ENCODE measurements at regions of chr9 and their contacts with region 1.

Region 1: DNA sequence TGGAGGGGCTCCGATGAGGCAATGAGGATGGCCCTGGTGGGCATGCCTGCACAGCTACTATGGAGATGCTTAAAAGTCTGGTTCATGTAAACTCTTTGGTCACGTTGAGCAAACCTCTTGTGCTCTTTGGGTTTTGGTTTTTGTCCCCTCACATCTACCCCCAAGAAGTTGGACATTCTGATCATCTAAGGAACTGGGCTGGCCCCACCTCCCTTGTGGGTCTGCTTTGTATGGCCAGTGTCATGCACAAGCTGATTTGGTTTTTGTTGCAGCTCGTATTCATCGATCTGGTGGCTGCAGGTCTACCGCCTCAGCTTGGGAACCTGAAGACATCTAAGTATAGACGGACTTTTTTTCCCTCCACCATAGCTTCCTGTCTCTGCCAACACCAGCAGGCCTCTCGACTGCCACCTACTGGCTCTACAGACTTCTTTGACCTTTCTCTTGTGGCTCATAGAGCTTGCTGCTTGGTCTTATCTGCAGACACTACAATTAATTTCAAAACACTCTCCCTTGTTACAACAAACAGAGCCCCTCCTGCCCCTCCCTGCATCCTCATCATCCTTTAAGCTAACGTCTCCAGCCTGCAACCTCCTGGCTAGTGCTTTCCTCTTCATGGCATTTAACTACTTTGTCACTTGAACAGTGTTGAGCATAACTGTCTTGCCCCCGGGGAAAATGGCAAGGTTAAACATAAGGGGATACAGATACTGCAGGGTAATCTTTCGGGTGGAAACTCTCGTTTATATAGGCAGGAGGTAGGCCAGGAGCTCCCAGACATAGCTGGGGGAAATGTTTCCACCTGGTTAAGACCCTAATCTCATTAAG is 34.5 kb downstream of the TSTD2 start:
- DNase-seq: peak; percentile 87
- H3K4me3 Mint-ChIP-seq: no peak overlapping the region
- H3K27ac Mint-ChIP-seq: no peak overlapping the region
- H3K4me1 Mint-ChIP-seq: peaks cover 4% of the 10 kb centered on the region
- H3K27me3 Mint-ChIP-seq: no peaks in the 10 kb centered on the region

Region 2: DNA sequence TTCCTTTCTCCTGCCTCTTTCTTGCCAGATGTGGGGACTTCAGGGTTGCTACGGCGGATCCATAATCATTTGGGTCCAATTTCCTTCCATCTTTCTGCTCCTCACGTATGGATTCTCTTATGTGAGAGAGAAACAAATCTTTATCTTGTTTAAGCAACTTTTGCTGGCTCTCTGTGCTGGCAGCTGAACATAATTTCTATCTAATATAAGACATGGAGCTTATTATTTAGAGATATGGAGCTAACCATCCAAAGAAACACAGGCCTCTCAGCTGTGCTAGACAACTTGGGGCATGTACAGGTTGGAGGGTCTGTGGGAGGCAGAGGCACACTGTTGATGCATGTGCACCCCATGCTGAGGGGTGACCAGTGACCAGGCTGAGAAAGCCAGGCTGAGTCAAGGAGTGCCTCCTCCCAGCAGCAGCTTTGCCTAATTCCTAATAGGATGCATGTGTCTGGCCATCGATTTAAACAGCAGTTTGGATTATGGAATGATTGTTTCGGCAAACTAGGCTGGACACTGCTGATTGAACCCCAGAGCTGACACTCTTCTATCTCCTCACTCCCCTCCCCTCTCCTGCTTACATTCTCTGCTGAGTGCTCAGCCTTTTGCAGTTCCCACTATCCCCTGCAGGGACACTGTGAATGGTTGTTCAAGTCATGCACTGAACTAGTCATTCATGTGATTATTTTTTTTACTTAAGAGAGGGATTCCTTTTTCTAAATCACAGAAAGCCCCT is 1527.4 kb before region 1 on chr9:
- CTCF ChIA-PET with region 1: no interaction called
- intact Hi-C with region 1: no loop called
- DNase-seq: peak; percentile 52
- H3K4me3 Mint-ChIP-seq: no peak overlapping the region
- H3K27ac Mint-ChIP-seq: no peak overlapping the region
- H3K4me1 Mint-ChIP-seq: no peaks in the 10 kb centered on the region
- H3K27me3 Mint-ChIP-seq: peaks cover 2% of the 10 kb centered on the region

Region 3: DNA sequence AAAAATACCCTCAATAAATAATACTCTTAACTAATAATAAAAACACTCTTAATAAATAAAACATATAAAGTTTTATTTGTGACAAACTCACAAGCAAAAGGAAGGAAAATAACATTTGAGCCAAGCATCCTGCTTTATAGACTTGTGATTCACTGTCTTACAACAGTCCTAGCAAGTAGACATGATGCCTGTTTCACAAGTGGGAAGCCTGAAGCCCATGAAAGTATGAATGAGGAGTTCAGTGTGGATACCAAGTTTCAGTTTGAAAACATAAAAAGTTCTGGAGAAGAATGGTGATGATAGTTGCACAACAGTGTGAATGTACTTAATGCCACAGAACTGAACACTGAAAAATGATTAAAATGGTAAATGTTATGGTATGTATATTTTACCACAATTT is 1137.8 kb before region 1 on chr9:
- CTCF ChIA-PET with region 1: no interaction called
- intact Hi-C with region 1: no loop called
- DNase-seq: no peak
- H3K4me3 Mint-ChIP-seq: no peak overlapping the region
- H3K27ac Mint-ChIP-seq: no peak overlapping the region
- H3K4me1 Mint-ChIP-seq: peaks cover 10% of the 10 kb centered on the region
- H3K27me3 Mint-ChIP-seq: no peaks in the 10 kb centered on the region

Region 4: GRCh38 chr9:97386733-97387503 is 211.8 kb before region 1 on chr9:
- CTCF ChIA-PET with region 1: interaction called, 21 read pairs
- intact Hi-C with region 1: loop called (anchors 1 kb)
- DNase-seq: peak; percentile 86
- H3K4me3 Mint-ChIP-seq: no peak overlapping the region
- H3K27ac Mint-ChIP-seq: no peak overlapping the region
- H3K4me1 Mint-ChIP-seq: peaks cover 19% of the 10 kb centered on the region
- H3K27me3 Mint-ChIP-seq: peaks cover 14% of the 10 kb centered on the region

Region 5: GRCh38 chr9:97411789-97412625 is 186.7 kb before region 1 on chr9 and contains the start of gene TDRD7:
- CTCF ChIA-PET with region 1: interaction called, 32 read pairs
- intact Hi-C with region 1: loop called (anchors 1 kb)
- DNase-seq: peak; percentile 85
- H3K4me3 Mint-ChIP-seq: peak within 1 kb of the TSS; percentile 79
- H3K27ac Mint-ChIP-seq: peak within 1 kb of the TSS; percentile 44
- H3K4me1 Mint-ChIP-seq: peaks cover 13% of the 10 kb centered on the region
- H3K27me3 Mint-ChIP-seq: peaks cover 9% of the 10 kb centered on the region
- total RNA-seq, gene TDRD7: 6.9 to 7.4 TPM

Region 6: GRCh38 chr9:97468658-97469448 is 129.8 kb before region 1 on chr9:
- CTCF ChIA-PET with region 1: interaction called, 129 read pairs
- intact Hi-C with region 1: loop called (anchors 1 kb)
- DNase-seq: peak; percentile 65
- H3K4me3 Mint-ChIP-seq: no peak overlapping the region
- H3K27ac Mint-ChIP-seq: no peak overlapping the region
- H3K4me1 Mint-ChIP-seq: no peaks in the 10 kb centered on the region
- H3K27me3 Mint-ChIP-seq: no peaks in the 10 kb centered on the region

Region 7: GRCh38 chr9:97475059-97475458 is 123.6 kb before region 1 on chr9:
- CTCF ChIA-PET with region 1: interaction called, 129 read pairs
- intact Hi-C with region 1: no loop called
- DNase-seq: no peak
- H3K4me3 Mint-ChIP-seq: no peak overlapping the region
- H3K27ac Mint-ChIP-seq: no peak overlapping the region
- H3K4me1 Mint-ChIP-seq: no peaks in the 10 kb centered on the region
- H3K27me3 Mint-ChIP-seq: no peaks in the 10 kb centered on the region

Region 8: GRCh38 chr9:97570899-97571298 is 27.8 kb before region 1 on chr9:
- CTCF ChIA-PET with region 1: interaction called, 24 read pairs
- intact Hi-C with region 1: no loop called
- DNase-seq: no peak
- H3K4me3 Mint-ChIP-seq: no peak overlapping the region
- H3K27ac Mint-ChIP-seq: no peak overlapping the region
- H3K4me1 Mint-ChIP-seq: peaks cover 16% of the 10 kb centered on the region
- H3K27me3 Mint-ChIP-seq: no peaks in the 10 kb centered on the region